ENCODE measurements at regions of chr3 and their contacts with region 1.

Region 1: DNA sequence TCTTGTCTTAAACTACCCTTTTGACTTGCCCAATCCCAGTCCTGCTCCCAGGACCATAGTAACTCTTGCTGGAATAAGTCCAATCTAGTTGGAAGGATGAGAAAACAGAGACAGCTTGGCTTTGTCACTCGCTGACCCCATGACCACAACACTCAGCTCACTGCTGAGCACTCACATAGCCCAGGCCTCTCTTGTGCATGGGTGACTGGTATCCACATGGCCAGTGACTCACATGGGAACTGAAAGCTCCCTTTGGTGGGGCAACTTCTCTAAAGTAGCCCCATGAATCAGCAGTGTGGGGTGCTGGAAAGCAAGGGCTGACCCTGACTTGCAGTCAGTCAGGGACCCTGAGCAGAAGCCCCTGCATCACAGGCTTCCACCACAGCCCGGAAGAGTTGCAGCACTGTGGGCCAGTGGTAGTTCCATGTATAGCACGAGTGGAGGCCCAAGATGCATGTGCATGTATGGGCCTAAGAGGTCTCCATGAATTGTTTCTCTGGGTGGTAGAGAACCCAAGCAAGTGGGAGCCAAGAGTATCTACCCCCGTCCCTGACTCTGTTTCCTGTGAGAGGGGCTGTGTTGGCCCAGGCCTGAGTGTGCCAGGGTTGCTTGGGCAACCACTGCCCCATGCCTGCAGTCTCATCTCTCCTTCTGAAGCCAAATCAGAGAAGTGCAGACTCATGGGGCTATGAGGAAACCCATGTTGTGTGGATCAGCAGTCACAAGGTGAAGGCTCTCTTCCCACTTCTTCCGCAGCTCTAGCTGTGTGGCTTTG is 62.1 kb upstream of the XCR1 start:
- DNase-seq: no peak
- H3K4me3 ChIP-seq: no peak overlapping the region
- H3K27ac ChIP-seq: no peak overlapping the region
- H3K4me1 ChIP-seq: no peaks in the 10 kb centered on the region
- H3K27me3 ChIP-seq: no peaks in the 10 kb centered on the region
- CTCF ChIP-seq: no peak
- POLR2A ChIP-seq: no peak

Region 2: GRCh38 chr3:45864760-45865519 is 224.5 kb before region 1 on chr3:
- intact Hi-C with region 1: no loop called
- DNase-seq: no peak
- H3K4me3 ChIP-seq: no peak overlapping the region
- H3K27ac ChIP-seq: no peak overlapping the region
- H3K4me1 ChIP-seq: no peaks in the 10 kb centered on the region
- H3K27me3 ChIP-seq: no peaks in the 10 kb centered on the region
- CTCF ChIP-seq: no peak
- POLR2A ChIP-seq: no peak

Region 3: GRCh38 chr3:45995236-45996192 is 93.9 kb before region 1 on chr3 and contains the start of gene FYCO1:
- intact Hi-C with region 1: no loop called
- DNase-seq: peak; percentile 90 to 93
- H3K4me3 ChIP-seq: peak within 1 kb of the TSS; percentile 83 to 92 (median 86)
- H3K27ac ChIP-seq: peak within 1 kb of the TSS; percentile 92 to 94
- H3K4me1 ChIP-seq: peaks cover 5 to 12% of the 10 kb centered on the region in 2 donors
- H3K27me3 ChIP-seq: no peaks in the 10 kb centered on the region
- CTCF ChIP-seq: no peak
- POLR2A ChIP-seq: peak; percentile 76
- total RNA-seq, gene FYCO1: 40.7 to 48.2 (median 44.6) TPM

Region 4: DNA sequence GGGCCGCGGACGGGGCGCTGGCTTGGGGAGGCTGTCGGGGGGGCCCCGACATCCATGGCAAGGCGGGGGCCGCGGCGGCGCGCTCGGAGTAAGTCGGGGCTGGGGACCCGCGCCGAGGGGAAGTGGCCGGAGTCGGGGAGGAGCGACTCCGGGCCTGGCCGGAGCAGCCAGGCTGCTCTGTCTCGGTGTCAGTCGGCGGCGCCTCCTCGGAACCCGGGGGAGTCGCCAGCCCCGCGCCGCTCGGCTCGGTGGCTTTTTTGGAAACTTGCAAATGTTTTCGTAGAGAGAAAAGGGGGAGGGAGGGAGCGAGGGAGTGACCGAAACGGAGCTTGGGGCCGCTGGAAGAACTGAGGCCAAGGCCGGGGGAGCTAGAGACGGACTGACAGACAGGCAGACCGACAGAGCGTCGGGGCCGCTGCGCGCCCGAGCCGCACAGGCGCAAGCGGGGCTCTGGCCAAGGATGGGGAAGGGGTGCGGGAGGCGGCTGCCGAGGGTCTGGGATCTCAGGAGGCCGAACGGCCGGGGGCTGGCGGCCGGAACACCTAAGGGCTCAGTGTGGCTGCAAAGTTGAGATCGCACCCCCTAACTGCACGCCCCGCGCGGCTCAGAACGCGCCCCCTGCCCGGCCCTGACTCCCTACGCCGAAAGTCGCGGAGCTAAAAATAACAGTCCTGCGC is 793.1 kb after region 1 on chr3:
- intact Hi-C with region 1: loop called (anchors 10 kb)
- DNase-seq: no peak
- H3K4me3 ChIP-seq: peak overlapping the region; percentile 50 to 73 (median 64)
- H3K27ac ChIP-seq: peak overlapping the region; percentile 55 to 92
- H3K4me1 ChIP-seq: peaks cover 0 to 2% of the 10 kb centered on the region in 2 donors
- H3K27me3 ChIP-seq: peaks cover 0 to 20% of the 10 kb centered on the region in 2 donors
- CTCF ChIP-seq: no peak
- POLR2A ChIP-seq: no peak